ENCODE measurements at regions of chr20 and their contacts with region 1.

Region 1: GRCh38 chr20:46022411-46023147 is 6.4 kb upstream of the SLC12A5 start:
- DNase-seq: peak; percentile 68 to 84
- ATAC-seq: peak; percentile 52 to 63 (median 55)
- H3K4me3 ChIP-seq: no peak overlapping the region
- H3K4me3 Mint-ChIP-seq: peak overlapping the region; percentile 81
- H3K27ac ChIP-seq: no peak overlapping the region
- H3K27ac Mint-ChIP-seq: no peak overlapping the region
- H3K4me1 ChIP-seq: peaks cover 22% of the 10 kb centered on the region
- H3K4me1 Mint-ChIP-seq: peaks cover 25 to 26% of the 10 kb centered on the region in 2 donors
- H3K27me3 ChIP-seq: peaks cover 23% of the 10 kb centered on the region
- H3K27me3 Mint-ChIP-seq: peaks cover 42 to 69% of the 10 kb centered on the region in 2 donors
- CTCF ChIP-seq: peak; percentile 73

Region 2: DNA sequence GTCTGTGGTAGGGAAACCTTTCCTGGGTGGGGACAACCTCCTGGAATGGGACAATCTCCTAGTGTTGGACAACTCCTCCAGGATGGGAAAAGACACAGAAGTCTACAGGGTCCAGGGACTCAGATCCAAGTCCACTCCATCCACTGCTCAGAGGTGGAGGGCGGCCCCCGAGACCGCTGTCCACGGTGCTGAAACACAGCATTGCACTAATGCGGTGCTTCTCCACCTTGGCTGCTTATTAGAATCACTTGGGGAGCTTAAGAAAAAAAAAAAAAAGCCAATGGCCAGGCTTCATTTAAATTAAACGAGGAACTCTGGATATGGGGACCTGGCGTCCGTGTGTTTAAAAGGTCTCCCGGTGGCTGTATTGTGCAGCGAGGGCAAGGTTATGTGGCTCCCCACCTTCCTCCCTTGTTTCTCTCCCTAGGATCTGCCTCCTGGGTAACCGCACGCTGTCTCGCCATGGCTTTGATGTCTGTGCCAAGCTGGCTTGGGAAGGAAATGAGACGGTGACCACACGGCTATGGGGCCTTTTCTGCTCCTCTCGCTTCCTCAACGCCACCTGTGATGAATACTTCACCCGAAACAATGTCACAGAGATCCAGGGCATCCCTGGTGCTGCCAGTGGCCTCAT is 18.4 kb after region 1 on chr20:
- intact Hi-C with region 1: no loop called
- DNase-seq: peak; percentile 40 to 63
- ATAC-seq: peak in 2 of 3 donors; percentile 66 to 70
- H3K4me3 ChIP-seq: no peak overlapping the region
- H3K4me3 Mint-ChIP-seq: no peak overlapping the region
- H3K27ac ChIP-seq: no peak overlapping the region
- H3K27ac Mint-ChIP-seq: no peak overlapping the region
- H3K4me1 ChIP-seq: no peaks in the 10 kb centered on the region
- H3K4me1 Mint-ChIP-seq: no peaks in the 10 kb centered on the region
- H3K27me3 ChIP-seq: no peaks in the 10 kb centered on the region
- H3K27me3 Mint-ChIP-seq: peaks cover 23 to 25% of the 10 kb centered on the region in 2 donors
- CTCF ChIP-seq: no peak

Region 3: DNA sequence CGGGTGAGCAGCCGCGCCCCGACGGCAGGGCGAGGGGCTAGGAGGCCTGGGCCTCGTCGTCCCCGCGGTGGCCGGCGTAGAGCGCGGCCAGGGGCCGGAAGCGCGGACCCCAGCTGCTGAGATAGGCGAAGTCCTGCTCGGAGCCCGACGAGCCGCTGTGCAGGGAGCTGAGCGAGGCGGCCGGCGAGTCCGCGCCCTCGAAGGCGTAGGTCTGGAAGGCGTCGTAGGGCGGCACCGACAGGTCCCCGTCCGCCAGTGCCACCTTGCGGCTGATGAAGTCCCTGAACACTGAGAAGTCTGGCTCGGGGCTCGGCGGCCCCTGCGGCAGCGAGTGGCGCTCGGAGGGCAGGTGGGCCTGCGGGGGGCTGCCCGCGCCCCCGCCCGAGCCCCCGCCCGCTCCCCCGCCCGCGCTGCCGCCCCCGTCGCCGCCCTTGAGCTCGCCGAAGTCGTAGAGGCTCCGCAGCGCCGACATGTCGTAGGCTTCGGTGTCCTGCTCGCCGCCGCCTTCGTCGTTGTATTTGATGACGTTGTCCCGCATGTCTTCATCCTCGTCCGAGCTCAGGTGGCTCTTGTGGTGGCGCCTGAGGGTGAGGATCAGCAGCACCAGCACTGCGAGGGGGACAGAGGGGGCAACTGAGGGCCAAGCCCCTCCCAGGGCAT is 152.0 kb after region 1 on chr20:
- intact Hi-C with region 1: loop called (anchors 2 kb)
- DNase-seq: peak; percentile 63 to 83
- ATAC-seq: peak; percentile 76 to 98 (median 93)
- H3K4me3 ChIP-seq: no peak overlapping the region
- H3K4me3 Mint-ChIP-seq: no peak overlapping the region
- H3K27ac ChIP-seq: no peak overlapping the region
- H3K27ac Mint-ChIP-seq: no peak overlapping the region
- H3K4me1 ChIP-seq: peaks cover 4% of the 10 kb centered on the region
- H3K4me1 Mint-ChIP-seq: peaks cover 0 to 7% of the 10 kb centered on the region in 2 donors
- H3K27me3 ChIP-seq: peaks cover 14% of the 10 kb centered on the region
- H3K27me3 Mint-ChIP-seq: peaks cover 43 to 66% of the 10 kb centered on the region in 2 donors
- CTCF ChIP-seq: peak; percentile 56

Region 4: GRCh38 chr20:46689082-46689754 is 666.6 kb after region 1 on chr20 and contains the start of gene TP53RK:
- intact Hi-C with region 1: loop called (anchors 10 kb)
- DNase-seq: peak; percentile 92 to 98
- ATAC-seq: peak; percentile 94 to 98 (median 94)
- H3K4me3 ChIP-seq: peak within 1 kb of the TSS; percentile 86
- H3K4me3 Mint-ChIP-seq: peak within 1 kb of the TSS; percentile 99
- H3K27ac ChIP-seq: peak within 1 kb of the TSS; percentile 82
- H3K27ac Mint-ChIP-seq: peak within 1 kb of the TSS; percentile 92 to 97
- H3K4me1 ChIP-seq: peaks cover 23% of the 10 kb centered on the region
- H3K4me1 Mint-ChIP-seq: peaks cover 51 to 54% of the 10 kb centered on the region in 2 donors
- H3K27me3 ChIP-seq: no peaks in the 10 kb centered on the region
- H3K27me3 Mint-ChIP-seq: no peaks in the 10 kb centered on the region
- CTCF ChIP-seq: peak; percentile 23
- total RNA-seq, gene TP53RK: 5.0 to 10.4 (median 7.8) TPM

Measured in natural killer cell (primary cell).